ENCODE measurements at regions of chr14 and their contacts with region 1.

Region 1: GRCh38 chr14:31357279-31357678 is 63.1 kb downstream of the HEATR5A start:
- DNase-seq: no peak
- ATAC-seq: no peak
- H3K4me3 ChIP-seq: no peak overlapping the region
- H3K27ac ChIP-seq: no peak overlapping the region
- H3K4me1 ChIP-seq: peaks cover 0 to 15% (median 0%) of the 10 kb centered on the region in 12 donors
- H3K27me3 ChIP-seq: no peaks in the 10 kb centered on the region
- CTCF ChIP-seq: no peak
- POLR2A ChIP-seq: no peak

Region 2: GRCh38 chr14:31127690-31128089 is 229.6 kb before region 1 on chr14:
- intact Hi-C with region 1: loop called in 3 of 10 experiments (anchors 10 kb)
- DNase-seq: no peak
- ATAC-seq: no peak
- H3K4me3 ChIP-seq: no peak overlapping the region
- H3K27ac ChIP-seq: no peak overlapping the region
- H3K4me1 ChIP-seq: peaks cover 0 to 13% (median 0%) of the 10 kb centered on the region in 12 donors
- H3K27me3 ChIP-seq: no peaks in the 10 kb centered on the region
- CTCF ChIP-seq: no peak
- POLR2A ChIP-seq: no peak

Region 3: DNA sequence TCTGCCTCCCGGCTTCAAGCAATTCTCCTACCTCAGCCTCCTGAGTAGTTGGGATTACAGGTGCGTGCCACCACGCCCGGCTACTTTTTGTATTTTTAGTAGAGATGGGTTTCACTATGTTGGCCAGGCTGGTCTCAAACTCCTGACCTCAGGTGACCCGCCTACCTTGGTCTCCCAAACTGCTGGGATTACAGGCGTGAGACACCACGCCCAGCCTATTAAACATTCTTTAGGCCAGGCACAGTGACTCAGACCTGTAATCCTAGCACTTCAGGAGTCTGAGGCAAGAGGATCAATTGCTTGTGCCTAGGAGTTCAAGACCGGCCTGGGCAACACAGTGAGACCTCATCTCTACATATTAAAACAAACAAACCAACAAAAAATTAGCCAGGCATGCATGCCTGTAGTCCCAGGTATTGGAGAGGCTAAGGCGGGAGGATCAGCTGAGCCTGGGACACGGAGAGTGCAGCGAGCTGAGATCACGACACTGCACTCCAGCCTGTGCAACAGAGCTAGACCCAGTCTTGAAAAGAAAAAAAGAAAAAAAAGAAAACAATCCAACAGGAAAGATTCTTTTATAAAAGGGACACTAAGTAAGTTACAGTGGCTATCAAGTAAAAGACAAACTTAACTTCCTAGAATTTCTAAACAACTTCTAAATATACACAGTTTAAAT is 219.9 kb before region 1 on chr14:
- intact Hi-C with region 1: loop called in 6 of 10 experiments (anchors 10 kb)
- DNase-seq: no peak
- ATAC-seq: no peak
- H3K4me3 ChIP-seq: no peak overlapping the region
- H3K27ac ChIP-seq: no peak overlapping the region
- H3K4me1 ChIP-seq: no peaks in the 10 kb centered on the region
- H3K27me3 ChIP-seq: no peaks in the 10 kb centered on the region
- CTCF ChIP-seq: no peak
- POLR2A ChIP-seq: no peak

Region 4: DNA sequence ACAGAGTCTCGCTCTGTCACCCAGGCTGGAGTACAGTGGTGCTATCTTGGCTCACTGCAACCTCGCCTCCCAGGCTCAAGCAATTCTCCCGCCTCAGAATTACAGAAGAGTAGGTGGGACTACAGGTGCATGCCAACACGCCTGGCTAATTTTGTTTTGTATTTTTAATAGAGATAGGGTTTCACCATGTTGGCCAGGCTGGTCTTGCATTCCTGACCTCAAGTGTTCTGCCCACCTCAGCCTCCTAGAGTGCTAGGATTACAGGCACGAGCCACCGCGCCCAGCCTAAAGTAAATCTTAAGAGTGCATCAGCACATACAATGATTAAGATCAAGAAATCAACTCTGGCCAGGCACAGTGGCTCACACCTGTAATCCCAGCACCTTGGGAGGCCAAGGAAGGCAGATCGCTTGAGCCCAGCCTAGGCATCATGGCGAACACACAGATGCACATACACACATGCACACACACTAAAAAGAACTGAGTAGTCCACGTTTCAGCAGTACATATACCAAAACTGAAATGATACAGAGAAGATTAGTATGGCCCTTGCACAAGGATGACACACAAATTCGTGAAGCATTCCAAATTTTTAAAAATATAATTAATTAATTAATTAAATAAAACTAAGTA is 214.7 kb before region 1 on chr14:
- intact Hi-C with region 1: loop called in 6 of 10 experiments (anchors 10 kb)
- DNase-seq: no peak
- ATAC-seq: no peak
- H3K4me3 ChIP-seq: no peak overlapping the region
- H3K27ac ChIP-seq: no peak overlapping the region
- H3K4me1 ChIP-seq: no peaks in the 10 kb centered on the region
- H3K27me3 ChIP-seq: no peaks in the 10 kb centered on the region
- CTCF ChIP-seq: no peak
- POLR2A ChIP-seq: no peak

Region 5: GRCh38 chr14:31159682-31160296 is 197.5 kb before region 1 on chr14:
- intact Hi-C with region 1: loop called in 1 of 10 experiments (anchors 10 kb)
- DNase-seq: no peak
- ATAC-seq: no peak
- H3K4me3 ChIP-seq: no peak overlapping the region
- H3K27ac ChIP-seq: peak overlapping the region in 1 of 12 donors; percentile 37
- H3K4me1 ChIP-seq: peaks cover 0 to 4% (median 0%) of the 10 kb centered on the region in 12 donors
- H3K27me3 ChIP-seq: no peaks in the 10 kb centered on the region
- CTCF ChIP-seq: no peak
- POLR2A ChIP-seq: no peak

Region 6: GRCh38 chr14:33259578-33260163 is 1902.4 kb after region 1 on chr14:
- intact Hi-C with region 1: no loop called
- DNase-seq: no peak
- ATAC-seq: no peak
- H3K4me3 ChIP-seq: no peak overlapping the region
- H3K27ac ChIP-seq: no peak overlapping the region
- H3K4me1 ChIP-seq: peaks cover 0 to 6% (median 0%) of the 10 kb centered on the region in 12 donors
- H3K27me3 ChIP-seq: no peaks in the 10 kb centered on the region
- CTCF ChIP-seq: no peak
- POLR2A ChIP-seq: no peak